ENCODE measurements at regions of chr21 and their contacts with region 1.

Region 1: GRCh38 chr21:31354604-31355443 is 10.8 kb upstream of the TIAM1 start:
- DNase-seq: peak; percentile 51
- ATAC-seq: peak; percentile 92
- H3K4me3 ChIP-seq: no peak overlapping the region
- H3K27ac ChIP-seq: no peak overlapping the region
- H3K4me1 ChIP-seq: no peaks in the 10 kb centered on the region
- H3K27me3 ChIP-seq: no peaks in the 10 kb centered on the region
- CTCF ChIP-seq: no peak
- EP300 ChIP-seq: peak in 1 of 2 experiments; percentile 31; a peak in 1 of 4 replicates
- POLR2A ChIP-seq: no peak
- RAD21 ChIP-seq: no peak

Region 2: DNA sequence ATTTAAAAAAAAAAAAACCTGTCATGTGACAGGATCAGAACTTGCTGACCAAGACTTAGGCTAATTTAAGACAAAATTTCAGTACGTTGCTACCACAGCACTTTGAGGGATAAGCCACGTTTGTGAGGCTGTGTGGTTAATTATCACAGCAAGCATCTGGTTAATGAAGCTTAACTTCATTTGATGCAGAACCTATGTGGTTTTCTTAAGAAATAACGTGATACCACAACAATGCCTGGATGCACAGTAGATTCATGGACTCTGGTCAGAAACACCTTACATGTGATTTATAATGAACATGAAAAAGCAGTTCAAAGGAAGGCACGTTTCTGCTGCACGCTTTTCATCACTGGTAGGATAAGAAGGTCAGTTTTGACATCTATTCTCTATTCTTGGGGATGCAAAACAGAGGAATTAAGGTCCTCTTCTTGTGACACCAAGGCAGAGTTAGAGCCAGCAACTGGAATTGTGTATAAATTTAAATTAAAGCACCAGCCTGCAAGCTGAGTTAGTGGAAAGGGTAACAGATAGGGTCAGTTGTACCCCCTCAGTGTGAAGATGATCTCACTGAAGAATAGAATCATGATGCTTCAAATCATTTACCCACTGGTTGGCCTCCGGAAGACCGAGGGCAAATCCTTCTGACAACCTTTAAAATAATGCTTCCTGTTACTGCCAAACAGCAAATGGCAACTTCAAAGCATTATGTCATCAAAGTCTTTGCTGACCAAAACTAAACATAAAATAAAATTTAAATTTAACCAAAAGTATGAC is 535.8 kb before region 1 on chr21:
- CTCF ChIA-PET with region 1: no interaction called
- POLR2A ChIA-PET with region 1: no interaction called
- RAD21 ChIA-PET with region 1: no interaction called
- SMC1A ChIA-PET with region 1: no interaction called
- in situ Hi-C with region 1: no loop called
- intact Hi-C with region 1: no loop called
- DNase-seq: no peak
- ATAC-seq: no peak; the same call in 2 of the 3 replicates
- H3K4me3 ChIP-seq: no peak overlapping the region
- H3K27ac ChIP-seq: no peak overlapping the region
- H3K4me1 ChIP-seq: no peaks in the 10 kb centered on the region
- H3K27me3 ChIP-seq: no peaks in the 10 kb centered on the region
- CTCF ChIP-seq: no peak
- EP300 ChIP-seq: no peak
- POLR2A ChIP-seq: no peak
- RAD21 ChIP-seq: no peak

Region 3: DNA sequence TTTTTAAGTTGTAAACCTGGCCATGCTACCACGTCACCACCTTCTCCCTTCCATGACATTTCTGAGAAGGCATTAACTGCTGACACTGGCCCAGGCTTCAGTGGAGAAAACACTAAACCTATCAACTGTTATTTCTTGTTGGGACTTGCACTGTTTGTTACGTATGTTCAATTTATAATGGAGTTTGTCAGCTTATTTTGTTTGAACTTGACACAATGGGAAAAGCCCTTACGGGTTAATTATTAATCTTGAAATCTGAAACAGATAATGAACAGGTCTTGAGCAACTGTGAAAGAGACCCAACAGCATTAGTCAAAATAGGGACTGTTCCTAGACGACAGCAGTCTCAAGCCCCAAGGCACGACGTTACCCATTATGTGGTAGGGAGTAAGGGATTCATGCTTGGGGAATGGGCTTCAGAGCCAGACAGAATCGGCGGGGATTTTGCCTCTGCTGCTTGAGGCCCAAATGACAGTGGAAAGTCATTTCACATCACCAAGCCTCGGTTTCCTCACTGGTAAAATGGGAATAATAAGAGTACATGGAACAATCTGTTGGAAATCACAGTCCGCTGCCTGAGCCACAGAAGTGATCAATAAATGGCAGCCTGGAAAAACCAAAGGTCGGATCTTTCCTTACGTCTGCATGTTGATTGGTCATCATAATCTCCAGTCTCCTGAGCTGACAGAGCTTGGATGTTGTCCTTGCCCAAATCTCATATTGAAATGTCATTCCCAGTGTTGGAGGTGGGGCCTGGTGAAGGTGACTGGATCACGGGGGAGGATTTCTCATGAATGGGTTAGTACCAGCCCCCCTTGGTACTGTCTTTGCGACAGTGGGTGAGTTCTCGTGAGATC is 55.3 kb before region 1 on chr21:
- CTCF ChIA-PET with region 1: interaction called, 3 read pairs
- POLR2A ChIA-PET with region 1: no interaction called
- RAD21 ChIA-PET with region 1: no interaction called
- SMC1A ChIA-PET with region 1: no interaction called
- in situ Hi-C with region 1: no loop called
- intact Hi-C with region 1: loop called (anchors 1 kb)
- DNase-seq: peak; percentile 51
- ATAC-seq: peak; percentile 91
- H3K4me3 ChIP-seq: no peak overlapping the region
- H3K27ac ChIP-seq: no peak overlapping the region
- H3K4me1 ChIP-seq: no peaks in the 10 kb centered on the region
- H3K27me3 ChIP-seq: no peaks in the 10 kb centered on the region
- CTCF ChIP-seq: no peak
- EP300 ChIP-seq: peak in 1 of 2 experiments; percentile 85; a peak in 1 of 4 replicates
- POLR2A ChIP-seq: no peak
- RAD21 ChIP-seq: no peak

Region 4: DNA sequence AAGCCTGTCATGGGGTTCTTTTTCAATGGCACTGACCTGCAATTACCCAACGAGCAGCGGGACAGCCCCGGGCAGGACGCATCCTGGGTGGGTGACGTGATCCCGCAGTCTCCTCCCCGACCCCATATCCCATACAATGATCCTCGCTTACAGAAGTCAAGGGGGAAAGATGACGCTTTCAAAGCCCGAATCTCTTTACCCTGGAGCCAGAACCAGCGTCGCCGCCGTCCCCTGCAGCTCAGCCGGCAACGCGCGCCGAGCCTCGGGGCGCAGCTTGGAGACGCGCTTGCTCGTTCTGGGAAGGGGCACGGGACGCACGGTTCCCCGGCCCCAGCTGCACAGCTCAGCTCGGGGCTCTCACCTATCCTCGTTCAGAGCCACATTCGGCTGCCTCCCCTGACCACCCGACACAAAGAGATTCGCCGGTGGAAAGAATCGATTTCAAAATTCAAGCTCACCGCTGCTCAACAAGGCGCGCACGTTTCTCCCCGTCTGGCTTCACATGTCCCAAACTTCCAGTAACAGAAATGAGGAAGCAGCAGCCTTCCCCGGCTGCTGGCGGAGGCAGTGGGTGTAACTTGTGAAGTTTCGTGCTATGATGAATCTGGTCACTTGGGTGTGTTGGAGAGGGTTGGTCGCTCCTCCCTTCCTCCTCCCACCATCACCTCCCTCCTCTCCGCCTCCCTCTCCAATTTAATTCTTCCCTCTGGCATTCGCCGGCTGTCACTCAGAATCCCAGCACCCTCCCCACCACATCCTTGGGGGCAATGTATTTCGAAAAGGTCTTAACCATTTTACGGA is 10.9 kb before region 1 on chr21 and contains the start of gene TIAM1:
- CTCF ChIA-PET with region 1: interaction called, 3 read pairs
- POLR2A ChIA-PET with region 1: no interaction called
- RAD21 ChIA-PET with region 1: interaction called, 3 read pairs
- SMC1A ChIA-PET with region 1: interaction called, 13 read pairs
- in situ Hi-C with region 1: no loop called
- intact Hi-C with region 1: no loop called
- DNase-seq: no peak
- ATAC-seq: peak; percentile 76
- H3K4me3 ChIP-seq: no peak within 1 kb of the TSS
- H3K27ac ChIP-seq: no peak within 1 kb of the TSS
- H3K4me1 ChIP-seq: no peaks in the 10 kb centered on the region
- H3K27me3 ChIP-seq: no peaks in the 10 kb centered on the region; a peak in 1 of 4 replicates
- CTCF ChIP-seq: no peak
- EP300 ChIP-seq: no peak
- POLR2A ChIP-seq: no peak
- RAD21 ChIP-seq: no peak
- polyA plus RNA-seq, gene TIAM1: 0.31 to 0.42 TPM

Region 5: GRCh38 chr21:31370893-31371544 is 16.2 kb after region 1 on chr21:
- CTCF ChIA-PET with region 1: no interaction called
- POLR2A ChIA-PET with region 1: no interaction called
- RAD21 ChIA-PET with region 1: no interaction called
- SMC1A ChIA-PET with region 1: no interaction called
- in situ Hi-C with region 1: no loop called
- intact Hi-C with region 1: no loop called
- DNase-seq: no peak
- ATAC-seq: no peak
- H3K4me3 ChIP-seq: no peak overlapping the region
- H3K27ac ChIP-seq: no peak overlapping the region
- H3K4me1 ChIP-seq: no peaks in the 10 kb centered on the region
- H3K27me3 ChIP-seq: no peaks in the 10 kb centered on the region
- CTCF ChIP-seq: no peak
- EP300 ChIP-seq: no peak
- POLR2A ChIP-seq: no peak
- RAD21 ChIP-seq: no peak

Region 6: DNA sequence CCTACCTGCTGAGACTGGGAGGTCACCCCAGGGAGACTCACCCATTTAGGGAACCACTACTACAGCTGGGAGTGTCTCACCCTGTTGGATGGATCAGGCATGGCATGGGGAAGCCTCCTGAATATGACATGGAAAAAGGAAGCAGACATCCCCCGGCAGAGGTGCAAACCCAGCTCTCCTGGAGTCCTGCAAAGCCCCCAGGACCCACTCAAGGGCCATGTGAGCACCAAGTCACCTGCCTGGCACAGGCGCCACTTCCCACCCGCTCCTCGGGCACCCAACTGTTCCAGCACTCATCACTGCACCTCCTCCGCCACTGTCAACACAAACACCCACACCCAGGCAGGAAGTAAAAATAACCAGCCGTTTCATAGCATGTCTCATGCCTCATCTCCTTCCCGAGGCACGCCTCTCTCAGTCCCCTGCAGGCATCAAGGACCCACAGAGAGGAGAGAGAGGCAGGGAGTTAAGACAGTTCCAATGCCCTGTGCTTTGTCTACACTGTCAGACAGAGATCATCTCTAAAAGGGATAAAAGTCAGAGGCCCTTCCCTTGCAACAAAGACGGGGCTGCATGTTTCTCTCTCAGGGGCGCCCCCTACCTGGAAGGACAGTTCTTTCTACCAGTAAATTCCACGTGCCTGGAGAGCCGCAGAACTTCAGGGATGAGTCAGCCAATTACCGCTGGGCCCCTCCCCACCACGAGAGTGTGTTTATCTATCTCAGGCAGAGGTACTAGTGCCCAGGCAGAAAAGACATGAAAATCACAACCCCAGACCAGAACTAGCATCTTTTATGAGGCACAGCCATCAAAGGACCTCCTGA is 154.6 kb after region 1 on chr21:
- CTCF ChIA-PET with region 1: no interaction called
- POLR2A ChIA-PET with region 1: no interaction called
- RAD21 ChIA-PET with region 1: no interaction called
- SMC1A ChIA-PET with region 1: no interaction called
- in situ Hi-C with region 1: no loop called
- intact Hi-C with region 1: loop called (anchors 2 kb)
- DNase-seq: peak; percentile 41
- ATAC-seq: peak; percentile 70
- H3K4me3 ChIP-seq: no peak overlapping the region
- H3K27ac ChIP-seq: no peak overlapping the region; the same call in 1 of the 2 replicates
- H3K4me1 ChIP-seq: peaks cover 25% of the 10 kb centered on the region
- H3K27me3 ChIP-seq: no peaks in the 10 kb centered on the region
- CTCF ChIP-seq: peak; percentile 33 to 47 (median 39); a peak in 4 of 6 replicates
- EP300 ChIP-seq: peak; percentile 14 to 59; a peak in 2 of 4 replicates
- POLR2A ChIP-seq: no peak
- RAD21 ChIP-seq: no peak

Region 7: GRCh38 chr21:31629972-31630711 is 275.3 kb after region 1 on chr21:
- CTCF ChIA-PET with region 1: no interaction called
- POLR2A ChIA-PET with region 1: no interaction called
- RAD21 ChIA-PET with region 1: no interaction called
- SMC1A ChIA-PET with region 1: no interaction called
- in situ Hi-C with region 1: no loop called
- intact Hi-C with region 1: no loop called
- DNase-seq: no peak
- ATAC-seq: no peak
- H3K4me3 ChIP-seq: no peak overlapping the region
- H3K27ac ChIP-seq: no peak overlapping the region
- H3K4me1 ChIP-seq: no peaks in the 10 kb centered on the region
- H3K27me3 ChIP-seq: no peaks in the 10 kb centered on the region
- CTCF ChIP-seq: no peak
- EP300 ChIP-seq: no peak
- POLR2A ChIP-seq: no peak
- RAD21 ChIP-seq: no peak

Measured in GM12878 (cell line).